ENCODE measurements at regions of chr1 and their contacts with region 1.

Region 1: GRCh38 chr1:67149179-67149770 is 14.5 kb upstream of the C1orf141 start:
- DNase-seq: peak; percentile 65 to 76 (median 65)
- ATAC-seq: peak; percentile 93
- H3K4me3 ChIP-seq: no peak overlapping the region
- H3K27ac ChIP-seq: no peak overlapping the region
- H3K4me1 ChIP-seq: no peaks in the 10 kb centered on the region
- H3K27me3 ChIP-seq: no peaks in the 10 kb centered on the region

Region 2: GRCh38 chr1:66944330-66945274 is 204.7 kb before region 1 on chr1:
- intact Hi-C with region 1: no loop called
- DNase-seq: peak in 2 of 3 donors; percentile 52 to 74
- ATAC-seq: peak; percentile 84 to 87
- H3K4me3 ChIP-seq: no peak overlapping the region
- H3K27ac ChIP-seq: no peak overlapping the region
- H3K4me1 ChIP-seq: peaks cover 2% of the 10 kb centered on the region
- H3K27me3 ChIP-seq: no peaks in the 10 kb centered on the region

Region 3: DNA sequence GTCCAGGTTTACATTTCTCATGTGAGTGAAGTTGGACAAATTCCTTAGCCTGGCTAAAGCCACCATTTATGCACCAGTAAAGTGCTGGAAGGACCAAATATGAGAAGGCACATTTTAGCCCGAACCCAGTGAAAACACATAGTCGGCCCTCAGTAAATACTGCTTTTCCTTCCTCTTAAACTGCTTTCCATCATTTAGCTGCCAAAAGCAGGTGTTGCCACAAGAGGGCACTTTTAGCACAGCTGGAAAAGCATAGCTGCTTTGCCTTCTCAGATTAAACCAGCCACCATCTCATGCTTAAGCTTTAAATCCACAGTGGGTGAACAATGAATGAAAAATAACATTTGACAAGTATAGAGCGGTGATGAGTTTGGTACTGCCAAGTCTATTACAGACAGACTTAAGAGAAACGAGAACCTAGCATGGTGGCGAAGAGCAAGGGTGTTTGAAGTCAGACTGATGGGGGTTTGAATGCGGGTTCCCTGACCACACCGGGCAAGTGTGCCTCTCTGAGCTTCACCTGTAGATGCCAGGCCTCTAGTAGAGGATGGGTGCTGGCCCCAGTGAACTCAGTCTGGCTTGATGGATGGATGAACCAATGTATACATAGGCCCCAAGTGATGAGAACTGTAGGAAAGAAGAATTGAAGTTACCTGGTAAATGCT is 153.1 kb before region 1 on chr1:
- intact Hi-C with region 1: loop called (anchors 5 to 10 kb)
- DNase-seq: peak; percentile 43 to 63 (median 52)
- ATAC-seq: peak; percentile 63 to 68
- H3K4me3 ChIP-seq: no peak overlapping the region
- H3K27ac ChIP-seq: no peak overlapping the region
- H3K4me1 ChIP-seq: no peaks in the 10 kb centered on the region
- H3K27me3 ChIP-seq: no peaks in the 10 kb centered on the region